ENCODE measurements at regions of chr6 and their contacts with region 1.

Region 1: DNA sequence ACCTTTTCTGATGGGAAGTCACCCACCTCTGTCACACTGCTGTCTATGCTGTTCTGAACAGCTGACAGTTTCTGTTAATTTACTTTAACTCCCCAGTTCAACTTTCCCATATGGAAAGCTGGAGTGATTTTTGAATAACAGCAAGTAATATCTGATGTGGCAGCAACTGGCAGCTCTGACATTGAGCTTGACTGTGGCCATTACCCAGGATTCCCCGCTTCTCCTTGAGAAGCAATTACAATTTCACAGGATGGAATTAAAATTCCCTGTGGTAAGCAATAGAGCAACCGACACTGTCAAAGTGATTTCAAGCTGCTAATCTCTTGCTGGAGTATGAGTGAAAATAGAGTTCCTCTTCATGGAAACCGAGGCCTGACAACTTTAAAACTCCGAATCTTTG is 348.1 kb upstream of the SOX4 start:
- DNase-seq: no peak

Region 2: GRCh38 chr6:21199262-21199661 is 46.2 kb before region 1 on chr6:
- intact Hi-C with region 1: no loop called
- DNase-seq: no peak

Region 3: GRCh38 chr6:21295506-21296240 is 50.2 kb after region 1 on chr6:
- intact Hi-C with region 1: loop called in 1 of 2 experiments (anchors 2 kb)
- DNase-seq: no peak

Region 4: GRCh38 chr6:21406316-21406715 is 160.8 kb after region 1 on chr6:
- intact Hi-C with region 1: no loop called
- DNase-seq: no peak

Measured in posterior vena cava (tissue), 2 donors.